PC-9 (cell line): ENCODE measurements at regions of chr5 and their contacts with region 1.

Region 1: GRCh38 chr5:120463991-120464626 is at the start of gene PRR16:
- DNase-seq: peak in 1 of 2 experiments; percentile 59
- H3K4me3 ChIP-seq: peak within 1 kb of the TSS; percentile 59
- H3K27ac ChIP-seq: no peak within 1 kb of the TSS
- H3K4me1 ChIP-seq: no peaks in the 10 kb centered on the region; the same call in 1 of the 2 replicates
- H3K27me3 ChIP-seq: peaks cover 12% of the 10 kb centered on the region; the same call in 1 of the 2 replicates
- CTCF ChIP-seq: no peak
- total RNA-seq, gene PRR16: 2.8 and 5.0 TPM in 2 replicates

Region 2: DNA sequence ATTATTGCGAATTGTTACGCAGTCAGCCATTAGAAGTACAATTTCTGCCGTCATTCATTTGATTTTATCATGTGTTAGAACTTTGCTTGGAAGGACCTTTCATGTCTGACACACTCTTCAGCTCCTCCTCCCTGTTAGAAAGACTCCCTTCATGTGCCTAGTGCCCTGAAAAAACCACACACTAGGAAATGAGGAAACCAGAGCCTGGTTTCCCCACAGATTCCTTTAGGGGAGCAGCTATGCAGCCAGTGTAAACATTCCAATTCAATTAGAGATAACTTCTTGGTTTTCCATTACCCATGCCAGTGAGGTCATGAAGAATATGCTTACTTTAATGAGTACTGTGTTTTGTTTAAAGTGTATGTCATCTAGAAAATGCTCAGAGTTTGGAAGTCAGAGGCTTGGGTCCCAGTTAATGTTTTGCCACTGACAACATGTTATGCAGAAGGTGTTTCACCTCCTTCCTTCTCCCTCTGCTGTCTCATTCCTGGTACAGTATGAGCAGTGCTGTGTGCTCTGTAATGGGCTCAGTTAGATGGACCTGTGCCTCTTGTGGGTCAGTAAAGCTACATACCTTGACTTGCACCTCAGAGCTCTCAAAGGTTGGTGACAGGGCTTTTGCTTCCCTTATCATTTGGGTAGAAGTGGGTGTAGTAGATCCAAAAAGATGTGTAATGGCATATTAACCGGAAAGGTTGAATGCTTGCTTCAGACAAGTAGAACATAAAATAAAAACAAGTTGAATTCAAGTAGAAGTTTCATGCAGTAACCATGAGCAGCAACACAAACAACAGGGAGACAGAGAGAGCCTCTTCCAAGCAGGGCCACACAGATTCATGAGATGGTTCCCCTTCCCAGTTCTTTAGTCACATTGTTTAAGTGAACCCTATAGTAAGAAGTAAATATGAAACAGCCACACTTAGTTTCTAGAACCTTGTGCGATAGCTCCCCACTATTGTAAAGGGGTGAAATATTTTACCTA is 1160.9 kb before region 1 on chr5:
- CTCF ChIA-PET with region 1: no interaction called
- POLR2A ChIA-PET with region 1: no interaction called
- intact Hi-C with region 1: no loop called
- DNase-seq: peak; percentile 60 to 96
- H3K4me3 ChIP-seq: peak overlapping the region; percentile 7; the same call in 1 of the 2 replicates
- H3K27ac ChIP-seq: peak overlapping the region; percentile 65
- H3K4me1 ChIP-seq: peaks cover 40% of the 10 kb centered on the region
- H3K27me3 ChIP-seq: no peaks in the 10 kb centered on the region
- CTCF ChIP-seq: no peak

Region 3: DNA sequence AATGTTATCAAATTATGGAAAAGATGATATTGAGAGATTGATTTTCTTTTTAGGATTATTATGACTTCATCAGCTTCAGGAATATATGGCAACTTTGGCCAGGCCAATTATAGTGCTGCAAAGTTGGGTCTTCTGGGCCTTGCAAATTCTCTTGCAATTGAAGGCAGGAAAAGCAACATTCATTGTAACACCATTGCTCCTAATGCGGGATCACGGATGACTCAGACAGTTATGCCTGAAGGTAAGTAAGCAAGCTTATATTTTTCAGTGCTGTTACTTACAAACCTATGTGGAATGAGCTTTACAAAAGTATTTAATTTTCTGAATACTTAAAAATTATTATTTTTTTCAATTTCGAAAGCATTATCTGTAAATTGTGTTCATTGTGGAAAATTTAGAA is 985.3 kb before region 1 on chr5:
- CTCF ChIA-PET with region 1: interaction called, 18 read pairs
- POLR2A ChIA-PET with region 1: no interaction called
- intact Hi-C with region 1: loop called (anchors 5 kb)
- DNase-seq: no peak
- H3K4me3 ChIP-seq: no peak overlapping the region
- H3K27ac ChIP-seq: no peak overlapping the region
- H3K4me1 ChIP-seq: no peaks in the 10 kb centered on the region
- H3K27me3 ChIP-seq: no peaks in the 10 kb centered on the region
- CTCF ChIP-seq: no peak

Region 4: GRCh38 chr5:120236360-120236759 is 227.7 kb before region 1 on chr5:
- CTCF ChIA-PET with region 1: no interaction called
- POLR2A ChIA-PET with region 1: no interaction called
- intact Hi-C with region 1: no loop called
- DNase-seq: no peak
- H3K4me3 ChIP-seq: no peak overlapping the region
- H3K27ac ChIP-seq: no peak overlapping the region
- H3K4me1 ChIP-seq: 0 out of 2 replicates have a peak, but pooled peaks cover 11% of the 10 kb centered on the region
- H3K27me3 ChIP-seq: no peaks in the 10 kb centered on the region
- CTCF ChIP-seq: no peak

Region 5: GRCh38 chr5:120604888-120605287 is 140.8 kb after region 1 on chr5:
- CTCF ChIA-PET with region 1: no interaction called
- POLR2A ChIA-PET with region 1: no interaction called
- intact Hi-C with region 1: loop called (anchors 5 kb)
- DNase-seq: peak; percentile 42 to 95
- H3K4me3 ChIP-seq: no peak overlapping the region
- H3K27ac ChIP-seq: peak overlapping the region; percentile 77
- H3K4me1 ChIP-seq: peaks cover 33% of the 10 kb centered on the region
- H3K27me3 ChIP-seq: no peaks in the 10 kb centered on the region
- CTCF ChIP-seq: no peak

Region 6: GRCh38 chr5:120684749-120685415 is 220.8 kb after region 1 on chr5:
- CTCF ChIA-PET with region 1: no interaction called
- POLR2A ChIA-PET with region 1: no interaction called
- intact Hi-C with region 1: loop called (anchors 5 kb)
- DNase-seq: no peak
- H3K4me3 ChIP-seq: no peak overlapping the region
- H3K27ac ChIP-seq: no peak overlapping the region
- H3K4me1 ChIP-seq: 0 out of 2 replicates have a peak, but pooled peaks cover 6% of the 10 kb centered on the region
- H3K27me3 ChIP-seq: no peaks in the 10 kb centered on the region
- CTCF ChIP-seq: no peak